ENCODE measurements at regions of chr10 and their contacts with region 1.

Region 1: DNA sequence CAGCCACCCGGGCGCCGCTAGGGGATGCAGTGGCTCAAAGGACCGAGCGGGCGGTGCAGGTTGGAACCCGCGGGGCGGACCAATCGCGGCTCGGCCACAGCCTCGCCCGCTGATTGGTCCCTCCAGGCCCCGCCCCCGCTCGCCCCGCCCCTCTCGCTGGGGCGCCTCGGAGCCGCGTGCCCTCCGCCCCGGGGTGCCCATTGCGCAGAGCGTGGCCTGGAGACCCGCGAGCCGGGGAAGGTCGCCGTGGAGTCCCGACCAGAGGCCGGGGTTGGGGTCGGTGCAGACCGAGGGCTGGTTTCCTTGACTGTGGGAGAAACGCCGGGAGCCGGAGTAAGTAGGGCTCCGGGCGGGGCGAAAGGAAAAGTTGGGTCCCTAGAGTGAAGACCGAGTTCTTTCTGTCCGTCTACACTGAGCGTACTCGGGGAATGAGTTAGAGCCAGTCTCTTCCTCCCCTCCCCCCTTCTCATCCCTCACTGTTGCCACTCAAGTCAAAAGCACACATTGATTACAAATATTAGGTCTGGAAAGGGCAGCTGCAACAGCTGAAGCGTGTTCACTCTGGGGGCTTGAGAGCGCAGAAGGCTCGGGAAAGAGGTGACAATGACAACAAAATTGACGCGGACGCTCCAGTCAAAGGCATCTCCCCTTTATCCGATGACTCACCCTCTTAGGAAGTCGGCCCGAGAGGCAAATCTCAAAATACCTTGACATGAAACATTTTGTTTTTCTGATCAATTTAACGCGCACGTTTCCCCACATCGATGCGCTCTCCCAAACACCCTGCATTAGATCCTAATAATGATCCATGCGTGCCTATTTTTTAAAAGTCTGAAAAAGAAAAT is 820 bp upstream of the GATA3 start:
- DNase-seq: peak; percentile 98
- H3K4me3 Mint-ChIP-seq: peak overlapping the region; percentile 90
- H3K27ac Mint-ChIP-seq: peak overlapping the region; percentile 98
- H3K4me1 Mint-ChIP-seq: peaks cover 32% of the 10 kb centered on the region
- H3K27me3 Mint-ChIP-seq: peaks cover 23% of the 10 kb centered on the region

Region 2: DNA sequence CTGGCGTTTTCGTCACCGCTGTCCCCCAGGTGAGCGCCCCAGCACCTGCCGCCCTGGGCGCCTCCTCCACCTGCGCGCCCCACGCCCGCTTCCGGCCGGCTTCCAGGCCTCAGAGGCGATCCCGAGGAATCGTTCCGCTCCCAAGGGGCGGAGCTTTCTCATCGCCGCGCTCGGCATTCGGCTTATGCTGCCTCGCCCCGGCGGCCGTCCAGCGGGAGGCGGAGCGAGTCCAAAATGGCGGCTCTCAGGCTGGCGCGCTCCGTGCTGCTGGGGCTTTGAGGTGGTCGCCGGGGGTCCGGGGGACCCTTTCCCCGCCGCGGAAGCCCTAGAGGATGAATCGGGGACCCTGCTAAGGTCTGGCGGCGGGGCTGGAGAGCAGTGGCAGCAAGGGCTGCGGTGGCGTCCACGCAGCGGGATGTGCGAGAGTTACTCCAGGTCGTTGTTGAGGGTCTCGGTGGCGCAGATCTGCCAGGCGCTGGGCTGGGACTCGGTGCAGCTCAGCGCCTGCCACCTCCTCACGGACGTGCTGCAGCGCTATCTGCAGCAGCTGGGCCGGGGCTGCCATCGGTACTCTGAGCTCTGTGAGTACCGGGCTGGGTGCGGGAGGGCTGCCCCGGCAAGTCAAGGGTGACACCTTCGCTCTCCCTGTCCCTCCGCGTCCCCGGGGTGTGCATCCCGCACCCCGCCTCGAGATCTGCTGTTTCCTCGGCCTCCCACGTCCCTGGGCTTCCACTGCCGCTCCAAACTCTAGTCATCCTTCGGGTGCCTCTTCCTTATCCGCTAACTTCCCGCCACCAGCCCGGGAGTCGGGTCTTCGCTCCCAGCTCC is 235.2 kb before region 1 on chr10 and contains the start of gene TAF3:
- intact Hi-C with region 1: loop called (anchors 5 kb)
- DNase-seq: peak; percentile 99
- H3K4me3 Mint-ChIP-seq: peak within 1 kb of the TSS; percentile 97
- H3K27ac Mint-ChIP-seq: peak within 1 kb of the TSS; percentile 88
- H3K4me1 Mint-ChIP-seq: peaks cover 18% of the 10 kb centered on the region
- H3K27me3 Mint-ChIP-seq: peaks cover 19% of the 10 kb centered on the region
- total RNA-seq, gene TAF3: 15.1 and 15.9 TPM in 2 replicates

Region 3: DNA sequence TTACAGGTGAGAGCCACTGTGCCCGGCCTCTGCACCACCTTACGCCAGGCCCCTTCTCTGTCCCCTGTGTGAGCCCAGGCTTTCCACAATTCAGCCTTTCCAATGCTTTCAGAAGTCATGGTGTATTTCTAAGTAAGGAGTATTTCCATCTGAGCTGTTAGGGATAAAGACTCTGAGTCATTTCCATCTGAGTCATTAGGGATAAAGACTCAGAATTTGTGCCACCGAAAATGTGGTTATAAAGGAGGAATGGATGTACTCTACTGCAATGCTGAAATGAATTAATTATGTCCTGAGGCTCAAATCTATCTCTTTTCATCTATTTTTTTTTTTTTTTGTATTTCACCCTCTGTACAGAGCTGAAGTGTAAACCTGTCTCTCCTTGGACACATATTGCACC is 84.8 kb after region 1 on chr10:
- intact Hi-C with region 1: no loop called
- DNase-seq: no peak
- H3K4me3 Mint-ChIP-seq: peak overlapping the region; percentile 82
- H3K27ac Mint-ChIP-seq: peak overlapping the region; percentile 89
- H3K4me1 Mint-ChIP-seq: peaks cover 55% of the 10 kb centered on the region
- H3K27me3 Mint-ChIP-seq: no peaks in the 10 kb centered on the region

Region 4: GRCh38 chr10:8245131-8245813 is 191.6 kb after region 1 on chr10:
- intact Hi-C with region 1: loop called (anchors 1 kb)
- DNase-seq: peak; percentile 77
- H3K4me3 Mint-ChIP-seq: peak overlapping the region; percentile 67
- H3K27ac Mint-ChIP-seq: peak overlapping the region; percentile 88
- H3K4me1 Mint-ChIP-seq: peaks cover 55% of the 10 kb centered on the region
- H3K27me3 Mint-ChIP-seq: no peaks in the 10 kb centered on the region

Region 5: GRCh38 chr10:8321990-8322389 is 268.3 kb after region 1 on chr10:
- intact Hi-C with region 1: loop called (anchors 1 kb)
- DNase-seq: no peak
- H3K4me3 Mint-ChIP-seq: no peak overlapping the region
- H3K27ac Mint-ChIP-seq: no peak overlapping the region
- H3K4me1 Mint-ChIP-seq: peaks cover 30% of the 10 kb centered on the region
- H3K27me3 Mint-ChIP-seq: peaks cover 2% of the 10 kb centered on the region

Region 6: GRCh38 chr10:8473205-8473604 is 419.5 kb after region 1 on chr10:
- intact Hi-C with region 1: loop called (anchors 2 kb)
- DNase-seq: peak; percentile 75
- H3K4me3 Mint-ChIP-seq: no peak overlapping the region
- H3K27ac Mint-ChIP-seq: no peak overlapping the region
- H3K4me1 Mint-ChIP-seq: peaks cover 3% of the 10 kb centered on the region
- H3K27me3 Mint-ChIP-seq: peaks cover 30% of the 10 kb centered on the region

Region 7: DNA sequence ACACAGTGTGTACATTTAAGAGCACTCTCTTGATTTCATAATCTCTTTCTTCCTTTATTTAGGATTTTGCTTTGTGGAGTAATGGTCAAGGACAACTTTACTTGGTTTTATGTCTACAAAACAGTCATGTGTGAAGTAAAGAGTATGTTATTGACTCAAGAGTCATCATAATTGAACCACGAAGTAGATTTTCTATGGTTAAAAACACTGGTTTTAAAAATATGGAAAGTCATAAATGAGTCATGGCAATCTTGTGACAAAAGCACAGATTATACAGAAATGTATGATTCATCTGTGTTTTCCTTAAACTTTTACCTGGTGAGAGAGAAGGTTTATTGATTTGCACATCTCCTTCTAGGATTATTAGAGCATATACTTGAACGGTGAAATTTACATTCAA is 970.5 kb after region 1 on chr10:
- intact Hi-C with region 1: loop called (anchors 10 kb)
- DNase-seq: no peak
- H3K4me3 Mint-ChIP-seq: no peak overlapping the region
- H3K27ac Mint-ChIP-seq: peak overlapping the region; percentile 85
- H3K4me1 Mint-ChIP-seq: peaks cover 11% of the 10 kb centered on the region
- H3K27me3 Mint-ChIP-seq: peaks cover 9% of the 10 kb centered on the region

Region 8: DNA sequence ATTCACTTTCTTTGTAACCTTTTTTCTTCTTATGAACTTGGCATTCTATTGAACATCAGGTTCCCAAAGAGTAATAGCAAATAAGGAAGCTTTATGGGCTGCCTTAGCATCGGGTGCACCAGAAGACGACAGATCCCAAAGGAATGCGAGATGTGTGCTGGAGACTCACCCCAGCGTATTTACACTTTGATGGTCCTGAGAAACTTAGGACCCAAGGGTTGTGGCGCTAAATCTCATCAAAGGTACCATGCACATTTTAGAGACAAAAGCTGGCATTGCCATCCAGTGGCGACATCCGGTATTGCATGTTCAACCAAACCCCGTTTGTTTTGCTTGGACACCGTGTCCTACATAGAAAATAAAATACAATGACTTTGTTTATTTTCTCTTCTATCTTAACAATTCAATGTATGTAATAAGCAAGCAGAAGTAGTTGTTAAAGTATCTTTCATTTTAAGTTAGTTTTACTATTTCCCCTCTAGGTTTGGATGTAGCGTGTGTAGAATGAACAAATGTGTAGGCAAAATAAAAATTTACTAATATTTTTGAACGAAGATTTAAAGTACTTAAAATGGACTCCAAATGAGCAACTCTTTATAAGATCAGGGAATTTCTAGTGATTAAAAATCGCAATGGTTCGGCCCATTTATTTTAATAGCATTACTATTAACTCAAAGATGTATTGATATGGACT is 1155.6 kb after region 1 on chr10:
- intact Hi-C with region 1: loop called (anchors 1 kb)
- DNase-seq: peak; percentile 90
- H3K4me3 Mint-ChIP-seq: no peak overlapping the region
- H3K27ac Mint-ChIP-seq: no peak overlapping the region
- H3K4me1 Mint-ChIP-seq: peaks cover 3% of the 10 kb centered on the region
- H3K27me3 Mint-ChIP-seq: peaks cover 17% of the 10 kb centered on the region